Heart left ventricle (tissue), 16 donors: ENCODE measurements at regions of chr3 and their contacts with region 1.

Region 1: GRCh38 chr3:44913868-44914468 is 39.6 kb downstream of the TGM4 start:
- DNase-seq: peak; percentile 46 to 81 (median 65)
- ATAC-seq: peak; percentile 24 to 78 (median 68)
- H3K4me3 ChIP-seq: no peak overlapping the region
- H3K27ac ChIP-seq: no peak overlapping the region
- H3K4me1 ChIP-seq: peaks cover 0 to 15% (median 2%) of the 10 kb centered on the region in 12 donors
- H3K27me3 ChIP-seq: peaks cover 0 to 6% (median 0%) of the 10 kb centered on the region in 9 donors
- CTCF ChIP-seq: peak; percentile 61 to 86 (median 78)
- POLR2A ChIP-seq: no peak

Region 2: DNA sequence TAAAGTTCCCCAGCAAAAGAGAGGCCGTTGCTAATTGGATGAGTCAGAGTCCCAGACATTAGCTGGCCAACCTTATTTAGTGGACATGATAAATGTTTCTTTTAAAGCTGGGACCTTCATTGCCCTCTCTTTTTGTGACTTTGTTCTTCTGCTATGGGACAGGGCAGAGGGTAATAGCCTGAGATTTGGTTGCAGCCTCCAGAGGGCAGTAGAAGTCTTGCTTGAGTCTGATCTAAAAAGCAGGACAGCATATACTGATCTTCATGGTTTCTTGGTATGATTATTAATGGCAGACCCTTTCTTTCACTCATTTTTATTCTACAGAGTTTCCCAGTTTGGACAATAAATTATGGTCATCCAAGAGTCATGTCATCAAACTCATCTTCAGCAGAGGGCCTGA is 384.0 kb before region 1 on chr3:
- intact Hi-C with region 1: loop called (anchors 2 to 5 kb)
- DNase-seq: no peak
- ATAC-seq: no peak
- H3K4me3 ChIP-seq: no peak overlapping the region
- H3K27ac ChIP-seq: no peak overlapping the region
- H3K4me1 ChIP-seq: no peaks in the 10 kb centered on the region
- H3K27me3 ChIP-seq: peaks cover 0 to 40% (median 0%) of the 10 kb centered on the region in 9 donors
- CTCF ChIP-seq: peak in 3 of 12 donors; percentile 4 to 21 (median 4)
- POLR2A ChIP-seq: no peak

Region 3: DNA sequence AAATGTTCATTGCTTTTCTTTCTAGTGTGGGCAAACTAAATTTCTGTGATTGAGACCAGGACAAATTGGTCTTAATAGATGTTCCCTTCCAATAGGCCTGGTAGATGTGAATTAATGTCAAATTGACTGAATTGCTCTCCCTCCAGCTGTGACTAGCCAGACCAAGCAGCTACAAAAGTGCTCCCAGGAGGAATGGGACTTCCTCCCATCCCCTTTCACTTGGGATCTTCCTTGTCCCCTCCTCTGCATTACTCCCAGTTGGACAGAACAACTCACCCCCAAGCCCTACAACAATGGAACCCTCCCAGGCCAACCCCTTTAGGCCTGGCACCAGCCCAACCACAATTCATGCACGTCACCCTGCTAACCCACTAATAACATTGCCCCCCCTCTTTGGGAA is 378.6 kb before region 1 on chr3:
- intact Hi-C with region 1: loop called (anchors 2 to 5 kb)
- DNase-seq: no peak
- ATAC-seq: no peak
- H3K4me3 ChIP-seq: no peak overlapping the region
- H3K27ac ChIP-seq: no peak overlapping the region
- H3K4me1 ChIP-seq: no peaks in the 10 kb centered on the region
- H3K27me3 ChIP-seq: peaks cover 0 to 56% (median 6%) of the 10 kb centered on the region in 9 donors
- CTCF ChIP-seq: no peak
- POLR2A ChIP-seq: no peak

Region 4: DNA sequence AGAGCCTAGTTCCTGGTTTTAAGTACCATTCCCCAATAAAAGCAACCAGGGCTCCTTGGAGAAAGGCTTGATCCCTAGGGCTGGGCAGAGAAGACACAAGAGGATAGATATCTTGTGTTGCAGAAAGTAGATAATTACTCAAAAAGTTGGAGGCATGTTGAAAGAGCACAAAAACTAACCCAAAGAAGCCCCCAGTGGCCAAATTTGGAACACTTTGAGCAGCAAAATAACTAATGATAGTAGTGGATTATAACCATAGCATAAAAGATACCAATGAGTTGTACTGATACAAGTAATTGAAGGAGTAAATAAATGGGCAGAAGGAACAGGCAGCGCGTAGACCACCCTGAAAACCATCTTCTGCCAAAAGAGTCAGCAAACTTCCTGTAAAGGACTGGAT is 74.1 kb after region 1 on chr3:
- intact Hi-C with region 1: no loop called
- DNase-seq: no peak
- ATAC-seq: no peak
- H3K4me3 ChIP-seq: no peak overlapping the region
- H3K27ac ChIP-seq: no peak overlapping the region
- H3K4me1 ChIP-seq: peaks cover 0 to 49% (median 29%) of the 10 kb centered on the region in 12 donors
- H3K27me3 ChIP-seq: no peaks in the 10 kb centered on the region
- CTCF ChIP-seq: peak in 9 of 12 donors; percentile 17 to 52 (median 36)
- POLR2A ChIP-seq: no peak